PC-3 (cell line): ENCODE measurements at regions of chr1 and their contacts with region 1.

Region 1: DNA sequence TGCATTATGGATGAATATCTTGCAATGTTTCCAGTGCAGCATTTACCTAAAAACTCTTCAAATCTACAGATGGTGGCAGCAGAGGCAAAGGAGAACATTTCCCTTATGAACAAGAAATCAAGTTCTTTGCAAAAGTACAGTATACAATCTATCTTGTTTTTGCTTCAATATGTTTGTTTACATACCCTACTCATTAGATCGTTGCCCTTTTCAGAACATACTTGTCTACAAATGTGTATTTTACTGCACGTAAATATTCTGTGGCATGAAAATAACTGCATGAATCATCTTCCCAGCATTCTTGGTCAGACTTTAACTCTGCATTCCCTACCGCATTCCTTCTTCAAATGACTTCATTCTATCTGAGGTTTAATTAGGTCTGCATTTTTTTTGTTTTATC is 212.7 kb downstream of the ZP4 start:
- DNase-seq: peak; percentile 34
- ATAC-seq: peak; percentile 29; the same call in 1 of the 2 replicates
- H3K4me3 ChIP-seq: no peak overlapping the region
- H3K27ac ChIP-seq: no peak overlapping the region
- H3K4me1 ChIP-seq: no peaks in the 10 kb centered on the region
- H3K27me3 ChIP-seq: no peaks in the 10 kb centered on the region
- CTCF ChIP-seq: peak; percentile 36; the same call in 1 of the 2 replicates

Region 2: GRCh38 chr1:237619553-237619952 is 58.4 kb before region 1 on chr1:
- CTCF ChIA-PET with region 1: no interaction called
- POLR2A ChIA-PET with region 1: no interaction called
- intact Hi-C with region 1: no loop called
- DNase-seq: no peak
- ATAC-seq: no peak
- H3K4me3 ChIP-seq: no peak overlapping the region
- H3K27ac ChIP-seq: no peak overlapping the region
- H3K4me1 ChIP-seq: no peaks in the 10 kb centered on the region
- H3K27me3 ChIP-seq: no peaks in the 10 kb centered on the region
- CTCF ChIP-seq: no peak

Region 3: GRCh38 chr1:237736372-237737029 is 58.5 kb after region 1 on chr1:
- CTCF ChIA-PET with region 1: no interaction called
- POLR2A ChIA-PET with region 1: no interaction called
- intact Hi-C with region 1: loop called (anchors 5 kb)
- DNase-seq: peak; percentile 18
- ATAC-seq: 0 out of 2 replicates have a peak, but pooled peaks have one; percentile 22
- H3K4me3 ChIP-seq: no peak overlapping the region
- H3K27ac ChIP-seq: no peak overlapping the region
- H3K4me1 ChIP-seq: no peaks in the 10 kb centered on the region
- H3K27me3 ChIP-seq: no peaks in the 10 kb centered on the region
- CTCF ChIP-seq: peak; percentile 55

Region 4: GRCh38 chr1:238161955-238162354 is 484.0 kb after region 1 on chr1:
- CTCF ChIA-PET with region 1: no interaction called
- POLR2A ChIA-PET with region 1: no interaction called
- intact Hi-C with region 1: no loop called
- DNase-seq: no peak
- ATAC-seq: no peak
- H3K4me3 ChIP-seq: no peak overlapping the region
- H3K27ac ChIP-seq: no peak overlapping the region
- H3K4me1 ChIP-seq: no peaks in the 10 kb centered on the region
- H3K27me3 ChIP-seq: no peaks in the 10 kb centered on the region
- CTCF ChIP-seq: no peak